ENCODE measurements at regions of chr2 and their contacts with region 1.

Region 1: GRCh38 chr2:1091895-1092585 is 141.4 kb downstream of the SNTG2 start:
- DNase-seq: no peak
- ATAC-seq: no peak
- H3K4me3 Mint-ChIP-seq: no peak overlapping the region
- H3K27ac Mint-ChIP-seq: no peak overlapping the region
- H3K4me1 Mint-ChIP-seq: no peaks in the 10 kb centered on the region
- H3K27me3 Mint-ChIP-seq: no peaks in the 10 kb centered on the region
- CTCF ChIP-seq: no peak

Region 2: DNA sequence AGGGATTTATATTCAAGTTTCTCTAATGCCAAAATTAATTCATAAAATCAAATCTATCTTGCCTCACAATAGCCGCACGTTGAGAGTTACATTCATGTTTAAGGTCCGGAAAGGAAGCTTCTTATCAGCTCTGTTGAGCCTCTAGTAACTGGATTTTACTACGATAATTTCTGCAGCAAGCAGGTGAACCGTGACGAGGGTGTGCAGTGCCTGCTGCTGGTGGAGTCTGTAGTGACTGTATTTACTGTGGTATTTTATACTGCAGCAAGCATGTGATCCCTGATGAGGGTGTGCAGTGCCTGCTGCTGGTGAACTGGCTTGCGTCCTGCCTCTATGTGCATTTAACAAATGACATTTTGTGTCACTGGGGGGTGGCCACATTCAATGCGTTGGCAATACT is 21.4 kb before region 1 on chr2:
- CTCF ChIA-PET with region 1: no interaction called
- POLR2A ChIA-PET with region 1: no interaction called
- intact Hi-C with region 1: loop called (anchors 2 kb)
- DNase-seq: no peak
- ATAC-seq: no peak
- H3K4me3 Mint-ChIP-seq: no peak overlapping the region
- H3K27ac Mint-ChIP-seq: no peak overlapping the region
- H3K4me1 Mint-ChIP-seq: no peaks in the 10 kb centered on the region
- H3K27me3 Mint-ChIP-seq: no peaks in the 10 kb centered on the region
- CTCF ChIP-seq: no peak